A673 (cell line): ENCODE measurements at regions of chr2 and their contacts with region 1.

Region 1: DNA sequence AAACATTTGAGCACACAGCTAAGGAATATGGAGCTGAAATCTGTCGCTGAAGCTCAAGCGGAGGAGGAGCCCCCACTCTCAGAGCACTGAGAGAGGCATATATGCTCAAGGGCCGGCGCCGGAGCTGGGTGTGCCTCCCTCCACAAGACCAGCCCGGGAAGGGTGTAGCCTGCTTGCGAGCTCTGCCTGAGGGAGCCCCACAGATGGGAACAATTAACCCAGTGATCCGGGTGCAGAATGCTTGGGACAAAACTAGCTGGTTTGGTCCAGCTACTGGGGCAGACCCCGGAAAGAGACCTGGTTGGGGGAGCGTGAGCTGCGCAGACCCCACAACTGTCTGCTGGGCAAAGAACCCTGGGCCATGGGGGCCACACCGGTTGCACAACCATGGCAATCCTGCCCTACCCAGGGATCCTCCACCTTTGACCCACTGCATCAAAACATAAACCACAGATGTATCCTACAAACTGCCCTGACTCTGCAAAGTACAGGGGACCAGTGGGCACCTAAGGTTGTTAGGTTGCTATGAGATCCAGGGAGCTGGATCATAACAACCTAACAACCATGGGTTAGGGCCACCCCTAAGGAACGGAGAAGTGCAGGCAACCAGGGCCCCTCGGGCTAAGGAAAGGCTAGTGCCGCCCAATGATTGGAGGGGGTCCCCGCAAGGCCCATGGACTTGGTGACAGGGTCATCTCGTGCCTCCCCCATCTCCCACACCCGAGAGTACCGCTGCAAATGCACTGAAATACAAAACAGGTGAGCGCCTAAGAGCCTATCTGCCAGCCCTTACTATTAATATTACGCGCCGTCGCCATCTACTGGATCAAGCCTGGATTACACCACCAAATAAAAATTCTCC is 53.4 kb upstream of the SCN1A start:
- DNase-seq: peak; percentile 73
- H3K4me3 ChIP-seq: no peak overlapping the region
- H3K27ac ChIP-seq: no peak overlapping the region
- H3K4me1 ChIP-seq: no peaks in the 10 kb centered on the region
- H3K27me3 ChIP-seq: no peaks in the 10 kb centered on the region
- CTCF ChIP-seq: peak; percentile 75

Region 2: GRCh38 chr2:165953655-165954606 is 227.3 kb before region 1 on chr2 and contains the start of gene TTC21B:
- CTCF ChIA-PET with region 1: no interaction called
- POLR2A ChIA-PET with region 1: no interaction called
- intact Hi-C with region 1: loop called (anchors 2 kb)
- DNase-seq: peak; percentile 99
- H3K4me3 ChIP-seq: peak within 1 kb of the TSS; percentile 68
- H3K27ac ChIP-seq: peak within 1 kb of the TSS; percentile 86
- H3K4me1 ChIP-seq: peaks cover 31% of the 10 kb centered on the region
- H3K27me3 ChIP-seq: no peaks in the 10 kb centered on the region
- CTCF ChIP-seq: peak; percentile 90
- total RNA-seq, gene TTC21B: 83.0 TPM in 2 replicates

Region 3: GRCh38 chr2:166057370-166058164 is 123.6 kb before region 1 on chr2:
- CTCF ChIA-PET with region 1: no interaction called
- POLR2A ChIA-PET with region 1: no interaction called
- intact Hi-C with region 1: loop called (anchors 2 kb)
- DNase-seq: peak; percentile 48
- H3K4me3 ChIP-seq: no peak overlapping the region
- H3K27ac ChIP-seq: no peak overlapping the region
- H3K4me1 ChIP-seq: no peaks in the 10 kb centered on the region
- H3K27me3 ChIP-seq: no peaks in the 10 kb centered on the region
- CTCF ChIP-seq: peak; percentile 73

Region 4: DNA sequence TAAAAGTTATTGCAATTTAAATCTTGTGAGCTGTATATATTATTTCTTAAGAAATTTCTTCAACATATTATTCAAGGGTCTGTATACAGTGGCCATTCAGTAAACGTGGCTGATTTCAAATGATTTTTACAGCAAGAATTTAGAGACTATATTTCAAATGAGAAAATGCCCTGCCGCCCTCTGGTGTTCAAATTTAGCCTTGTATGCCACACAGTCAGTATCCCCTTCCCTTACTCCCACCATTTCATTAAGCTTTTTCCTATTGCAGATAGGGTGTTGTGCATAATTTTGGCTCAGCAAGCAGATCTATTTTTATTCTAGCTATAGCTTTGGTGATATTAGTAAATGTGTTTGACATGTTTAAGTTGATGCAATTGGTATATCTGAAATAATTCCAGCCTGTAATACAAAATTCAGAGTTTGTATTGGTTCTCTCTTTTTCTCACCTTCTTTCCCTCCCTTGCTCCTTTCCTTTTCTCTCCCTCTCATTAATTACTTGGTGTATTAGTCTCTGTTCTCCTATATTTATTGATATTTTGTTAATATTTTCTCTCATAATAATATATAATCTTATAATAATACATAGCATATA is 335.6 kb after region 1 on chr2:
- CTCF ChIA-PET with region 1: no interaction called
- POLR2A ChIA-PET with region 1: interaction called, 3 read pairs
- intact Hi-C with region 1: loop called (anchors 2 kb)
- DNase-seq: peak; percentile 57
- H3K4me3 ChIP-seq: no peak overlapping the region
- H3K27ac ChIP-seq: no peak overlapping the region
- H3K4me1 ChIP-seq: no peaks in the 10 kb centered on the region
- H3K27me3 ChIP-seq: no peaks in the 10 kb centered on the region
- CTCF ChIP-seq: peak; percentile 72

Region 5: GRCh38 chr2:166539340-166540162 is 358.4 kb after region 1 on chr2:
- CTCF ChIA-PET with region 1: no interaction called
- POLR2A ChIA-PET with region 1: no interaction called
- intact Hi-C with region 1: no loop called
- DNase-seq: peak; percentile 84
- H3K4me3 ChIP-seq: no peak overlapping the region
- H3K27ac ChIP-seq: no peak overlapping the region
- H3K4me1 ChIP-seq: no peaks in the 10 kb centered on the region
- H3K27me3 ChIP-seq: no peaks in the 10 kb centered on the region
- CTCF ChIP-seq: peak; percentile 86